A549 (cell line): ENCODE measurements at regions of chr3 and their contacts with region 1.

Region 1: GRCh38 chr3:127959846-127960245 is 44.8 kb downstream of the KBTBD12 start:
- DNase-seq: peak; percentile 31 to 37
- ATAC-seq: peak; percentile 71 to 82; a peak in 4 of 6 replicates
- H3K4me3 ChIP-seq: no peak overlapping the region
- H3K27ac ChIP-seq: peak overlapping the region; percentile 50 to 59; a peak in 4 of 6 replicates
- H3K4me1 ChIP-seq: peaks cover 30% of the 10 kb centered on the region
- CTCF ChIP-seq: peak; percentile 55
- EP300 ChIP-seq: no peak
- POLR2A ChIP-seq: no peak
- RAD21 ChIP-seq: peak; percentile 75 to 77

Region 2: DNA sequence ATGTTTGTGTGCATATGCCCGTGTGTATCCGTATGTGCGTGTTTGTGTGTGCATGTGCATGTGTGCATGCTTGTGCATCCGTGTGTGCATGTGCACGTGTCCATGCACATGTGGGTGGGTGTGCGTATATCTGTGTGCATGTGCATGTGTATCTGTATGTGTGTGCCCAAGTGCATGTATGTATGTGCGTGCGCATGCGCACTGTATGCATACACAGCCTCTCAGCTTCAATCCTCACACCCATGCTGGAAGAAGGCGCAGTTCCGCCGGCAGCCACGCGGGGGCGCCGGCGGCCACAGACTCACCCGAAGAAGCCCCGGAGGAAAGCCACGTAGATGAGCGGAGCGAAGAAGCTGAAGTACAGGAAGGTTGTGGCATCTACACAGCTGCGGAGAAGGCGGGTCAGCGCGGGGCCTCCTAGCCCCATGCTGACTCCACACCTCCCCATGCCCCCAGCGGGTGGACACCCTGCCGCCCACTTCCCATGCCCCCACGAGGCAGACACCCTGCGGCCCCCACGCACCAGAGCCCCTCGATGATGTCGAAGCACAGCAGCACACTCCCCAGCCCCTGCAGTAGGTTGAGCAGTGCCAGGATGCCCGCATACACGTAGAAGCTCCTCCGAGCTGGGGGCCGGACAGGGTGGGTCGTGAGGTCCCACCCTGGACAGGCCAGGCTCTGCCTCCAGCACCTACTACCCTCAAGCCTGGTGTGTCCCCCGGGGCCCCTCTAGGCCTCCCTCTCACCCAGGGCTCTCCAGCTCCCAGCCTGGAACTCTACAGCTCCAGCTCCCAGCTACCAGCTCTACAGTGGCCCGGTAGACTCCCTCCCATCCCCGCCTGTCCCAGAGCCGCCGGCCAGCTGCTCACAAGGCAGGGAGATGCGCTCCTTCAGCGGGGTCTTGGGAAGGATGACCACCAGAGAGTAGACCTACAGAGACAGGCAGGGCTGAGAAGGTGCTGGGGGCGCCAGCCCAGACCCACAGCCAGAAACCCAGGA is 384.7 kb before region 1 on chr3:
- CTCF ChIA-PET with region 1: interaction called, 14 read pairs
- POLR2A ChIA-PET with region 1: no interaction called
- DNase-seq: peak; percentile 89
- ATAC-seq: peak; percentile 80 to 95
- H3K4me3 ChIP-seq: no peak overlapping the region
- H3K27ac ChIP-seq: peak overlapping the region in 1 of 2 experiments; percentile 54; a peak in 2 of 6 replicates
- H3K4me1 ChIP-seq: peaks cover 5% of the 10 kb centered on the region
- CTCF ChIP-seq: peak; percentile 78
- EP300 ChIP-seq: no peak
- POLR2A ChIP-seq: no peak
- RAD21 ChIP-seq: peak; percentile 59 to 70

Region 3: DNA sequence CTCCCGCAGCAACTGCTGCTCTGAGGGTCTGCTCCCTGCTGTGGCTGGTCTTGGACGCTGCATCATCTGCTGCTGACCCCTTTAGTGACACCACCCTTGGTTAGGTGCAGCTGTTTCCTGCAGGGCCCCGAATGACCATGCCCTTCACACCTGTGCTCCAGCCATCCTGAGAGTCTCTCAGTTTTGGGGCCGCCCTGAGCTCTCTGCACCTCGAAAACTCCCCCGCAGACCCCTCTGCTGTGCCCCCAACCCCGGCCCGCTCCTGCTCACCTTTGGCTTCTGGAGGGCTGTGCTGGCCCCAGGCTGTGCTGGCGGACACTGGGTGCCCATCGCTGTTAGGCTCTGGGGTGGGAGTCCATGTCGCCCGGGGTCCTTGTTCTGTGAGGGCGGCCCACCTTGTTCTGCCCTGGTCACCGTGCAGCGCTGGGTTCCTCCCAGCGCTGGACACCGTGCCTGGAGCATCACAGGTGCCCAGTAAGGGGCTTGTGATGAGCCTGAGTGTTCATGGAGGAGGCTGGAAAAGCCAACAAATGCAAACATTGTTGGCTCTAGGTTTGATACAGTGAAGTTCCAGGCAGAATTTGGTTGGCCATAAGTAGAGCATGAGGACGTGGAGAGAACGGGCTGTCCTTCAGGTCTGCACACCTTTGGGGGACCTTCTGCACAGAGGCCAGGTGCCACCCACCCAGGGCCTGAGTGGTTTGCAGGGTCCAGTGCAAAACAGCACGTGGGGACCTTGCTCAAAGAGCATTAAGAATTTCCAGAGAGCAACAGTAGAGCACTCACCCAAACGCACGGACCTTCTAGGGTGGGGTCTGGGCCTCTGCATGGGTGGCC is 274.8 kb before region 1 on chr3:
- CTCF ChIA-PET with region 1: interaction called, 111 read pairs
- POLR2A ChIA-PET with region 1: no interaction called
- DNase-seq: no peak
- ATAC-seq: peak; percentile 49 to 54
- H3K4me3 ChIP-seq: no peak overlapping the region
- H3K27ac ChIP-seq: no peak overlapping the region
- H3K4me1 ChIP-seq: peaks cover 7% of the 10 kb centered on the region
- CTCF ChIP-seq: no peak
- EP300 ChIP-seq: no peak
- POLR2A ChIP-seq: no peak
- RAD21 ChIP-seq: no peak

Region 4: GRCh38 chr3:127697551-127698240 is 262.1 kb before region 1 on chr3:
- CTCF ChIA-PET with region 1: interaction called, 111 read pairs
- POLR2A ChIA-PET with region 1: no interaction called
- DNase-seq: peak; percentile 28 to 71
- ATAC-seq: peak; percentile 66 to 85; a peak in 5 of 6 replicates
- H3K4me3 ChIP-seq: no peak overlapping the region
- H3K27ac ChIP-seq: peak overlapping the region; percentile 68 to 87; a peak in 5 of 6 replicates
- H3K4me1 ChIP-seq: peaks cover 65% of the 10 kb centered on the region
- CTCF ChIP-seq: no peak
- EP300 ChIP-seq: no peak
- POLR2A ChIP-seq: no peak
- RAD21 ChIP-seq: no peak

Region 5: DNA sequence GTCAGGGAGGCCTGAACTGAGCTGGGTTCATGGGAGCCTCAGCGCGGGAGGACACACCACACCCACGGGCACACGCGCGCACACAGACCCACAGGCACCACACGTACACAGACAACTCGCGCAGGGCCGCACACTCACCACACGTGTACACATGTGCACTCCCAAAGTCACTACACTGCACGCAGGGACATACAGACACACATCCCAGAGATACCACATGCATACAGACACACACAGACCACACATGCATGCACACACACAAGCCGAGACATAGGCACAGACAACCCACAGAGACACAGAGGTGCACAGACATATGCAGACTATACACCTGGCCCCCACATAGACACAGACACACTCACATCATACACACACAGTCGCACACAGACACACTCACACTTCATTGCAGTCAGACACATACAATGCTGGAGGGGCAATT is 136.4 kb before region 1 on chr3:
- CTCF ChIA-PET with region 1: interaction called, 13 read pairs
- POLR2A ChIA-PET with region 1: no interaction called
- DNase-seq: peak in 1 of 2 experiments; percentile 16
- ATAC-seq: no peak; a peak in 2 of 6 replicates
- H3K4me3 ChIP-seq: peak overlapping the region; percentile 76
- H3K27ac ChIP-seq: peak overlapping the region; percentile 76 to 95
- H3K4me1 ChIP-seq: peaks cover 37% of the 10 kb centered on the region
- CTCF ChIP-seq: no peak
- EP300 ChIP-seq: no peak
- POLR2A ChIP-seq: no peak
- RAD21 ChIP-seq: no peak

Region 6: DNA sequence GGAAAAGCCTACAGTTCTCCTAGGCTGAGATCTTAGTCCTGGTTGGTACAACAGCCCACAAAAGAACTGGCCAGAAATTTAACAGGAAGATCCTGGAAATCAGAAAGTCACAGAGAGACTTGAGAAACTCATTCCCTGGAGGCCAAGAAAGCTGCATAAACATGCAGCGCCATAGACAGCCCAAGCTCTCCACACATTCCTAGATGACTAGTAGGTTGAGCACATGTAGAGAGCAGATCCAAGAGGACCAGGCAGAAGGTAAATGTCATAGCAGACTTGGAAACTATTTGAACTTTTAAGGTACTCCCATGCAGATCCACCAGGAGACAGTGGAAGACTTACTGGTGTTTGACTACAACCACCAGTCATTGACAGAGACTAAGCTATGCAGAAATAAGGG is 26.4 kb before region 1 on chr3:
- CTCF ChIA-PET with region 1: no interaction called
- POLR2A ChIA-PET with region 1: no interaction called
- DNase-seq: no peak
- ATAC-seq: no peak
- H3K4me3 ChIP-seq: no peak overlapping the region
- H3K27ac ChIP-seq: no peak overlapping the region
- H3K4me1 ChIP-seq: peaks cover 10% of the 10 kb centered on the region
- CTCF ChIP-seq: no peak
- EP300 ChIP-seq: no peak
- POLR2A ChIP-seq: no peak
- RAD21 ChIP-seq: no peak

Region 7: DNA sequence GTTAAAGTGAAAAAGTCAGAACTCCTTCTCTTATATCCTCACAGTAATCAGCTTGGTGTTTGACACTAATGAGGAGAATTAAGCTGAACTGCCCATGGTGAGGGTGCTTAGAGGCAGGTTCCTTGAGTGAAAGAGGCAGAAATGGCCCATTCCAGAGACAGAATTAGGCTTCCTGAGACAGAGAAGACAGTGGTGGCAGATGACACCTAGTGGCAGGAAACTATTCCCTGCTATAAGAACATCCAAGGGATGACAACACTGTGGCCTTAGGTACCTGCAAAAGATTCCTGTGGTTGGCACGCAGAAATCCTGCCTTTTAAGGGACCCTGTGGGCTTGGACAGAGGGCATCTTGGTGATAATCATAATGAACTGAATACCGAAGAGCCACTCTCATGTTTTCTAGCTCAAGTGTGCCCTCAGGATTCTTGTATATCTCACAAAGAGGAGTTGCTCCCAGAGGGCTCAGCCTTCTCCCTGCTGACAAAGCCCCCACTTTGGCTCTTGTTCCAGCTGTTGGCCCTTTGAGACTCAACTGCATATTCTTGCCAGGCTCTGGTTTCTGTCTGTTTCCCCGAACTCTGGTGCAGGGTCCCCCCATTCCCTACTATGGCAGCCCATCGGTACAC is 11.2 kb after region 1 on chr3:
- CTCF ChIA-PET with region 1: interaction called, 21 read pairs
- POLR2A ChIA-PET with region 1: no interaction called
- DNase-seq: peak; percentile 46 to 63
- ATAC-seq: peak; percentile 93 to 95
- H3K4me3 ChIP-seq: no peak overlapping the region
- H3K27ac ChIP-seq: no peak overlapping the region
- H3K4me1 ChIP-seq: no peaks in the 10 kb centered on the region
- CTCF ChIP-seq: peak; percentile 74
- EP300 ChIP-seq: no peak
- POLR2A ChIP-seq: no peak
- RAD21 ChIP-seq: peak; percentile 81 to 89

Region 8: GRCh38 chr3:127984241-127984975 is 24.6 kb after region 1 on chr3:
- CTCF ChIA-PET with region 1: no interaction called
- POLR2A ChIA-PET with region 1: no interaction called
- DNase-seq: no peak
- ATAC-seq: no peak
- H3K4me3 ChIP-seq: no peak overlapping the region
- H3K27ac ChIP-seq: no peak overlapping the region
- H3K4me1 ChIP-seq: peaks cover 5% of the 10 kb centered on the region; the same call in 1 of the 3 replicates
- CTCF ChIP-seq: no peak
- EP300 ChIP-seq: no peak
- POLR2A ChIP-seq: no peak
- RAD21 ChIP-seq: no peak